ENCODE measurements at regions of chr5 and their contacts with region 1.

Region 1: DNA sequence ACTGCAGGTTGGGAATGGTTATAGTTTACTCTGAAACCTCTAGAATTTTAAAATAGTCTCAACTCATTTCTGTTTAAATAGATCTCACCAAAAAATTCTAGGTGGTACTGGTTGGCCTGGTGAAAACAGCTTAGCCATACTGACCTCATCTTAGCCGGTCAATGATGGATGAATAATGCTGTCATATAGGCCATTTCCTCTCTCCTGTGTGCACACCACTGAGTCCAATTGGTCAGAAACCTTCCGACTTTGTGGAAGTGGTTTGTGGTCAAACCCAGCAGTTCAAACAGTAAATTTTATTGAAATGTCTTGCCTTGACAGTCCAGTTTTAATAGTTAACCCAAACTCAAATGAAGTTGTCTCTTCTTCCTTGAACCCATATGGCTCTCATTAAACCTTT is 98.6 kb downstream of the GIN1 start:
- DNase-seq: no peak
- H3K4me3 ChIP-seq: no peak overlapping the region
- CTCF ChIP-seq: no peak

Region 2: GRCh38 chr5:102991802-102992201 is 29.5 kb before region 1 on chr5:
- CTCF ChIA-PET with region 1: no interaction called
- POLR2A ChIA-PET with region 1: no interaction called
- DNase-seq: no peak
- H3K4me3 ChIP-seq: no peak overlapping the region
- CTCF ChIP-seq: no peak

Region 3: GRCh38 chr5:103031607-103032006 is 10.3 kb after region 1 on chr5:
- CTCF ChIA-PET with region 1: interaction called, 17 read pairs
- POLR2A ChIA-PET with region 1: no interaction called
- DNase-seq: no peak
- H3K4me3 ChIP-seq: no peak overlapping the region
- CTCF ChIP-seq: peak; percentile 17

Measured in AG04449 (cell line).